Activated CD8-positive, alpha-beta T cell treated with anti-CD3 and anti-CD28 coated beads for 36 hours (primary cell): ENCODE measurements at regions of chr1 and their contacts with region 1.

Region 1: DNA sequence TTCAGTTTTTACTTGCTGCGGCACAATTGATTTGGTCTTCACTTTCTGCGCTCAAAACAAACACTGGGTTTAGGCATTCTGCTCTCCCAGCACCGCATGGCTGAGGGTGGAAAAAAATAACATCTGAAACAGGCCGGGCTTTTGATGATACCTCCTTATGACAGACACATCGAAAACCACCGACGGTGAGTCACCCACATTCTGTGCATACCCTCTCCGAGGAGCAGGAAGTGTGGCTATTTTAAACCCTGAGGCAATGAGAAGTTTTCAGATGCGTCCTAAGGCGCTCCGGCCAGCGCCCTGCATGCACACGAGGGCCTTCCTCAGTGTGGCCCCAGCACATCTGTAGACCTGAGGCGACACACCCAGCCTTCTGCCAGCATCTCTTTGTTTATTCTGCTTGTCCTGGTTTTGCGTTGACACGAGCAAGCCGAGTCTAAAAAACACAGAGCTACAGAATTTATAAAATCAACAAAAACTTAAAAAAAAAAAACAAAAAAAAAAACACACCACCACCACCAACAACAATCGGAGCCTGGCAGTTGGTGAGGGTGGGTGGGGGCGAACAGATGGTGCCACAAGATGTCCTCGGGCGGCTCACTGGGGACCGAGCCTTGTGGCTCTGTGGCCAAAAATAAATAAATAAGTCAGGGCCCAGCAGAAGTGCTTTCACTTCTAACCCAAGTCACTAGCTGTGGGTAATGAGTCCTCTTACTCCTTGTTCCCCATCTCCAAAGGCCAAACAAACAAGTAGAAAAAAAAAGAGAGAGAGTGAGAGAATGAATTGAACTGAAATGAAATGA is 162.6 kb upstream of the IRF2BP2 start:
- DNase-seq: peak; percentile 98
- ATAC-seq: peak; percentile 72
- H3K4me3 Mint-ChIP-seq: peak overlapping the region; percentile 57
- H3K27ac Mint-ChIP-seq: peak overlapping the region; percentile 93
- H3K4me1 Mint-ChIP-seq: peaks cover 60% of the 10 kb centered on the region
- H3K27me3 Mint-ChIP-seq: no peaks in the 10 kb centered on the region
- CTCF ChIP-seq: no peak

Region 2: GRCh38 chr1:234730770-234731568 is 41.6 kb before region 1 on chr1:
- CTCF ChIA-PET with region 1: interaction called, 7 read pairs
- POLR2A ChIA-PET with region 1: interaction called, 23 read pairs
- intact Hi-C with region 1: loop called (anchors 2 kb)
- DNase-seq: peak; percentile 83
- ATAC-seq: peak; percentile 87
- H3K4me3 Mint-ChIP-seq: peak overlapping the region; percentile 47
- H3K27ac Mint-ChIP-seq: peak overlapping the region; percentile 94
- H3K4me1 Mint-ChIP-seq: peaks cover 77% of the 10 kb centered on the region
- H3K27me3 Mint-ChIP-seq: no peaks in the 10 kb centered on the region
- CTCF ChIP-seq: peak; percentile 33